ENCODE measurements at regions of chr9 and their contacts with region 1.

Region 1: GRCh38 chr9:109101810-109102209 is 17.9 kb downstream of the TMEM245 start:
- DNase-seq: no peak
- H3K4me3 Mint-ChIP-seq: peak overlapping the region; percentile 58
- H3K27ac Mint-ChIP-seq: peak overlapping the region; percentile 83
- H3K4me1 Mint-ChIP-seq: peaks cover 60% of the 10 kb centered on the region
- H3K27me3 Mint-ChIP-seq: no peaks in the 10 kb centered on the region

Region 2: DNA sequence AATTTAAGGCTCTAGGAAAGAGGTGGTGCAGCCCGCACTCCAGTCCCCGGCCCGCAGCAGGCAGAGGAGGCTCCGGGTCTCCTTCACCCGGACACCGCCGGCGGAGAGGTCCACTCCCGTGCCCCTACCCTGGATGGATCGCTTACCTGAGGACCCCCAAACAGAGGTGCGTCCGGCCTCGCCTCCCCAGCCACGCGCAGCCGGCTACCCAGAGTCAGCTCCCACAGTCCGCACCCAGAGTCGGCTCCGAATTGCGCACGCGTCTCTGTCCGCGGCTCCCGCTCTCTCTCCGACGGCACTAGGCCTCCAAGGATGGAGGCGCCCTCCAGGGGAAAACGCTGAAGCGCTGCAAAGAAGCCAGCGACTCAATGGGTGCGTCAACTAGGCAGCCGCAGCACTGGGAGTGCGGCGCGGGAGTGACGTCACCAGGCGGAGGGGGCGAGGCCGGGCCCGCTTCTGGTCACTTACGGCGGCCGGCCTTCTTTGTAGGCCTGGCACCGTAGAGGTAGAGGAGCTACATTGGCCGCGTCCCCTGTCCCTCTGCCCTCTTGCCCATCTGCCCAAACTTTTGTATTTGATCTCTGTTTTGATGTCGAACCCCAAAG is 168.0 kb before region 1 on chr9 and contains the start of gene ELP1:
- intact Hi-C with region 1: loop called (anchors 5 kb)
- DNase-seq: peak; percentile 89
- H3K4me3 Mint-ChIP-seq: peak within 1 kb of the TSS; percentile 98
- H3K27ac Mint-ChIP-seq: peak within 1 kb of the TSS; percentile 94
- H3K4me1 Mint-ChIP-seq: peaks cover 26% of the 10 kb centered on the region
- H3K27me3 Mint-ChIP-seq: no peaks in the 10 kb centered on the region
- total RNA-seq, gene ELP1: 31.7 and 32.7 TPM in 2 replicates

Region 3: GRCh38 chr9:109046346-109046745 is 55.5 kb before region 1 on chr9:
- intact Hi-C with region 1: loop called (anchors 2 kb)
- DNase-seq: no peak
- H3K4me3 Mint-ChIP-seq: no peak overlapping the region
- H3K27ac Mint-ChIP-seq: no peak overlapping the region
- H3K4me1 Mint-ChIP-seq: peaks cover 17% of the 10 kb centered on the region
- H3K27me3 Mint-ChIP-seq: no peaks in the 10 kb centered on the region

Region 4: GRCh38 chr9:109119439-109120203 is 17.8 kb after region 1 on chr9 and contains the start of gene TMEM245:
- intact Hi-C with region 1: loop called (anchors 1 kb)
- DNase-seq: peak; percentile 93
- H3K4me3 Mint-ChIP-seq: peak within 1 kb of the TSS; percentile 84
- H3K27ac Mint-ChIP-seq: peak within 1 kb of the TSS; percentile 83
- H3K4me1 Mint-ChIP-seq: peaks cover 36% of the 10 kb centered on the region
- H3K27me3 Mint-ChIP-seq: no peaks in the 10 kb centered on the region
- total RNA-seq, gene TMEM245: 24.0 and 25.8 TPM in 2 replicates

Region 5: DNA sequence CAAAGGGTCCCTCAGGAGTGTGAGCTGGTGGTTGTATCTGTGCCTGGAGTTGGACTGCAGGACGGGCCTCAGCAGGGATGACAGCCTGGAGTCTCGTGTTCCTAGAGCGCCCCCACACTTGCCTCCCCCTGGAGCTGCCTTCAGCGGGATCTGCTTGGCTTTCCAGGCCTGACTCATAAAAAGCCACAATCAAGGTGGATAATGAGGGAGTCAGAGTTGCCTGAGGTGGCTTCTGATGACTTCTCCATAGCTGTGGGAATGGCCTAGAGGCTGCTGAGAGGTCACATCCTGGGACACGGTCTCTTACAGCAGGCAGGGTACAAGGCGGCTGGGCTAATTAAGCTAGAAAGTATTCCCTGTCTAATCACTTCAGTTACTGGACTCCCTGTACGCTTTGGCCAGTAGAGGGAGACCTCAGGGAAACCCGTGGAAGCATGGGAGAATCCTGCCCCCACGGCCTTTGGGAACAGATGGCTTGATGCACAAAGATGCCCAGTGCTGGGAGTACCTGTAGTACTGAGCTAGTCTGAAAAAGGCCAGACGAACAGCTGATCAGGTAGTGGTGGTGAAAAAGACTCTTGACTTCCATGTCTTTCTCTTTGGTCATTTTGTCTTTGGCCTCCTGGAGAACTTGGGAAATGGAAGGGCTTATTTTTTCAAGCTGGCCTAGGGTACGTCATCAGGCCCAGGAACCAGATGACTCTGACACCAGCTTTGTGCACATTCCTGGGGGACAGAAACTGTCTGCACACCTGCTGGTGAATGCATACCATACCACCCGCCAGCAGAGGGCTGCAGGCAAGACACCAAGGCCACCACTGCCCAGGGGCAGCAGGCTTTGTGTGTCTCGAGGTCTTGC is 81.4 kb after region 1 on chr9:
- intact Hi-C with region 1: loop called (anchors 1 kb)
- DNase-seq: peak; percentile 11
- H3K4me3 Mint-ChIP-seq: no peak overlapping the region
- H3K27ac Mint-ChIP-seq: no peak overlapping the region
- H3K4me1 Mint-ChIP-seq: peaks cover 9% of the 10 kb centered on the region
- H3K27me3 Mint-ChIP-seq: peaks cover 15% of the 10 kb centered on the region

Region 6: GRCh38 chr9:110152704-110153374 is 1051.0 kb after region 1 on chr9:
- intact Hi-C with region 1: loop called (anchors 10 kb)
- DNase-seq: no peak
- H3K4me3 Mint-ChIP-seq: peak overlapping the region; percentile 37
- H3K27ac Mint-ChIP-seq: peak overlapping the region; percentile 77
- H3K4me1 Mint-ChIP-seq: peaks cover 95% of the 10 kb centered on the region
- H3K27me3 Mint-ChIP-seq: no peaks in the 10 kb centered on the region